ENCODE measurements at regions of chr14 and their contacts with region 1.

Region 1: DNA sequence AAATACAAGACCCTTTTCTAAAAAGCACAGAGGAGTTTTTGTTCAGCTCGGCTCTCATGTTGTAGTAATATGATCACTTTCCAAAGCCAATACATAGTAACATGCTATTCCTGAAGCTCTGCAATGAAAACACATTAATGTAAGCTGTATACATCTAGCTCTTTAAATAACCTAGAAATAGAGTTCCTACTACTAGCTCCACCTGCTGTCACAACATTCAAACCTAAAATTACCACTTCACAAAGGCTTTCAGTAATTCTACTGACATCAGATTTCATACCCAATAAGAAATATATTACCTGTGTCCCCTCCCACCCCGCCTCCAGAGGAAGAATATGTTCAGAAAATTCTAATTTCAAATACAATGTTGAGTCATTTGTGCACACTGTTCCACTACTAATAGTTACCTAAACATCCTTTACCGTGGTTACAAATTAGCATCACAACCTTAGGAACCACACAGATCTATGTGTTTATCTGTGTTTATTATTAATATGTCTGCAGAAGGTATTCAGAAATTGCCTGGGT is 17.8 kb downstream of the EFCAB11 start:
- DNase-seq: no peak
- H3K4me3 Mint-ChIP-seq: no peak overlapping the region
- H3K27ac Mint-ChIP-seq: no peak overlapping the region
- H3K4me1 Mint-ChIP-seq: no peaks in the 10 kb centered on the region
- H3K27me3 Mint-ChIP-seq: no peaks in the 10 kb centered on the region
- CTCF ChIP-seq: no peak

Region 2: DNA sequence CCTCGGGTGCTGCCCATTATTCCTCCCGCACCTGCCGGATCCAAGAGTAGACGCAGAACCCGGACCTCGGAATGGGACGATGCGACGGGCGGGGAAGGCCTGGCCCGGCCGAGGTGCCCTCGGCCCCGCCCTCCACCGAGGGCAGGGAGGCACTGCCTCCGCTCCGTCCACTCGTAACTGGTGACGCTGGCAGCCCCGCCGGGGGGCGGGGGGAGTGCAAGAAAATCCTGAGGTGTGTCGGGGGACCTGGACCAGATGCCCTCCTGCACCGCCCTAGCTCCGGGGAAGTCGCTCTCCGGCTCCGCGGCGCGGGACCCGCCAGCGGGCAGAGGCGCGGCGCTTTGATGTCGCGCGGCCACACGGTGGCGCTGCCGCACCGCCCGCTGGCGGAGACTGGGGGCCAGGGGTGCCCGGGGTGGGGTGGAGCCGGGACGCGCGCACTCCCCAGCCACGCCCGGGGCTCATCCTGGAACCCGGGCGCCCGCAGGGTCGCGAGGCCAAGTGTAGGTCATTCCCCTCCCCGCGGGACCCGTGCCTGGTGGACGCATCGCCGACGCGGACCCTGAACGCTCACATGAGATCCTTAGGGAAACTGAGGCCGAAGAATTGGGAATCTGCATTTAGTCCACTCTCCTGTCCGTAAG is 909.5 kb before region 1 on chr14:
- CTCF ChIA-PET with region 1: interaction called, 10 read pairs
- POLR2A ChIA-PET with region 1: no interaction called
- intact Hi-C with region 1: no loop called
- DNase-seq: peak; percentile 36
- H3K4me3 Mint-ChIP-seq: no peak overlapping the region
- H3K27ac Mint-ChIP-seq: no peak overlapping the region
- H3K4me1 Mint-ChIP-seq: no peaks in the 10 kb centered on the region
- H3K27me3 Mint-ChIP-seq: peaks cover 16% of the 10 kb centered on the region
- CTCF ChIP-seq: peak; percentile 93

Region 3: DNA sequence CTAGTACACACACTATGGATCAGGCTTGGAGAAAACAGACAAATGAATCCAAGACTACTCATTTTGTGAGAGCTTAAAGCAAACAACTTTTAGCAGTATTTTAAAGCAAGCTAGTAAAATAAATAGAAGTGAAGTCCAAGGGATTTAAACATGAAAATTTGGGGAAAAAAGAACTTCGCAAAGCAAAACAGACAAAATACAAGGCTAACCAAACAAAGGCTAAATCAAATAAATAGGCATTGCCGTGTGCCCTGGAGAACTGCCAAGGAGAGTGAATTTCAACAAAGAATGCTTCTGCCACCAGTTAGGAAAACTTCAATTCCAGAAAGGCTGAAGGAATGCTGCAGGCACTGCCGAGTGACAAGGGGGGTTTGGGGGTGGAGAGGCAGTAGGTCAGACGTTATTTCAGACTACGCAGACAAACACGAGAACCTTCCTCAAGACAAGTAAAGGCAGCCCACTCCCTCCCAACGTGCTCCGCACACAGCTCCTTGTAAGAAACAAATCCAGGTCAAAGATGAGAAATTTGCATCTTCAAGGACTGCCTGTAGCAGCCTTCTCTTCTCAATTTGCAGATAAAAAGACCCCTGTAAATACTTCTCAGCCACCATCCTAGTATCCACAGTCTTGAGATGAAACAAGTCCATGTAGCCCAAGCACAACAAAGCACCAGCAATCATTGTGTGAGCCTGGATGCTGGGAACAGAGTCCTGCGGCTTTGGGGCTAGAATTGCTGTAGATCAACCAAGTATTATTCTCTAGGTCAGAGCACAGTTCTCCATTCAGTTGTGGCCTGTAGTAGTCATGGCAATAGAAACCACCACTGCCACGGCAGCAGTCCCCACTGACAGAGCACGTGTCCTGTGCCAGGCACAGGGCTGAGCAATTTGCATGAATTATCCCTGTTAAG is 25.5 kb before region 1 on chr14:
- CTCF ChIA-PET with region 1: no interaction called
- POLR2A ChIA-PET with region 1: no interaction called
- intact Hi-C with region 1: no loop called
- DNase-seq: peak; percentile 23
- H3K4me3 Mint-ChIP-seq: no peak overlapping the region
- H3K27ac Mint-ChIP-seq: no peak overlapping the region
- H3K4me1 Mint-ChIP-seq: no peaks in the 10 kb centered on the region
- H3K27me3 Mint-ChIP-seq: no peaks in the 10 kb centered on the region
- CTCF ChIP-seq: no peak

Region 4: DNA sequence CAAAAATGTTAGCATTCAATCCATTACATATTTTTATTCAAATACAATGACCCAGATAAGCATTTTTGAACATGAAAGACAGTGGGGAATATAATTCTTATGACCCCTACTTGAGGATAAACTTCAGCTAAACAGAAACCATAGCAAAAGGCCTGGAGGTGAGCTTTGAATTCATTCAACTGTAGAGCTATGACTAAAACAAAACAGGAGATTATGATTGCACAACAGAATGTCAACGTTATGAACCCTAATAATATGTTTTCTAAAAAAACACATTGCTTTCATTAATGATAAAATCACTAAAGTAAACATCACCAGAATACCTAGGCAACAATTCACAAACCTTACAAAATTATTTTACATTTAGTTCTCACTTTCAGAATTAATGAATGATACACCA is 10.0 kb before region 1 on chr14:
- CTCF ChIA-PET with region 1: interaction called, 13 read pairs
- POLR2A ChIA-PET with region 1: interaction called, 5 read pairs
- intact Hi-C with region 1: no loop called
- DNase-seq: peak; percentile 37
- H3K4me3 Mint-ChIP-seq: no peak overlapping the region
- H3K27ac Mint-ChIP-seq: peak overlapping the region; percentile 85
- H3K4me1 Mint-ChIP-seq: peaks cover 13% of the 10 kb centered on the region
- H3K27me3 Mint-ChIP-seq: no peaks in the 10 kb centered on the region
- CTCF ChIP-seq: no peak

Region 5: GRCh38 chr14:89986462-89987160 is 49.9 kb after region 1 on chr14:
- CTCF ChIA-PET with region 1: no interaction called
- POLR2A ChIA-PET with region 1: no interaction called
- intact Hi-C with region 1: no loop called
- DNase-seq: no peak
- H3K4me3 Mint-ChIP-seq: no peak overlapping the region
- H3K27ac Mint-ChIP-seq: no peak overlapping the region
- H3K4me1 Mint-ChIP-seq: no peaks in the 10 kb centered on the region
- H3K27me3 Mint-ChIP-seq: no peaks in the 10 kb centered on the region
- CTCF ChIP-seq: no peak

Region 6: GRCh38 chr14:90177539-90178189 is 240.9 kb after region 1 on chr14:
- CTCF ChIA-PET with region 1: no interaction called
- POLR2A ChIA-PET with region 1: no interaction called
- intact Hi-C with region 1: no loop called
- DNase-seq: no peak
- H3K4me3 Mint-ChIP-seq: no peak overlapping the region
- H3K27ac Mint-ChIP-seq: no peak overlapping the region
- H3K4me1 Mint-ChIP-seq: no peaks in the 10 kb centered on the region
- H3K27me3 Mint-ChIP-seq: no peaks in the 10 kb centered on the region
- CTCF ChIP-seq: no peak